ENCODE measurements at regions of chr5 and their contacts with region 1.

Region 1: DNA sequence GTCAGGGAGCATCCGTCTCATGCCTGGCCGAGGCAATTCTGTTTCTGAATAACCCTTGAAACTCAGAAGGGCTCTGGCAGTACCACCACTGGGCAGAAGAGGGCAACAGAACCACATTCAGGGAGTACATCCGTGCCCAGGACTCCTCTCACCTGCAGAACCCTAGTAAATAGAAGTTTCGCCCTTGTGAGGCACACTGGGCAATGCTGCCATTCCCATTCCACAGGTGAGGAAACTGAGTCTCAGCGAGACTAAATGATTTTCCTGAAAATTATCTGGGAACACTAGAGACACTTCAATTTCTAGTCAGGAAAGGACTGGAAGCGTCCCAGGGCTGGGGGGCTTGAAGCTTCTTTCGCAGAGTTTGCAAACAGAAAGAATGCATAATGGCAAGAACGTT is 74.7 kb downstream of the FGF1 start:
- H3K4me3 ChIP-seq: no peak overlapping the region
- H3K27ac ChIP-seq: no peak overlapping the region
- H3K4me1 ChIP-seq: no peaks in the 10 kb centered on the region
- CTCF ChIP-seq: peak; percentile 80

Region 2: GRCh38 chr5:142597546-142598341 is 13.4 kb before region 1 on chr5:
- CTCF ChIA-PET with region 1: interaction called, 48 read pairs
- POLR2A ChIA-PET with region 1: no interaction called
- H3K4me3 ChIP-seq: no peak overlapping the region
- H3K27ac ChIP-seq: no peak overlapping the region
- H3K4me1 ChIP-seq: peaks cover 21% of the 10 kb centered on the region
- CTCF ChIP-seq: no peak

Region 3: DNA sequence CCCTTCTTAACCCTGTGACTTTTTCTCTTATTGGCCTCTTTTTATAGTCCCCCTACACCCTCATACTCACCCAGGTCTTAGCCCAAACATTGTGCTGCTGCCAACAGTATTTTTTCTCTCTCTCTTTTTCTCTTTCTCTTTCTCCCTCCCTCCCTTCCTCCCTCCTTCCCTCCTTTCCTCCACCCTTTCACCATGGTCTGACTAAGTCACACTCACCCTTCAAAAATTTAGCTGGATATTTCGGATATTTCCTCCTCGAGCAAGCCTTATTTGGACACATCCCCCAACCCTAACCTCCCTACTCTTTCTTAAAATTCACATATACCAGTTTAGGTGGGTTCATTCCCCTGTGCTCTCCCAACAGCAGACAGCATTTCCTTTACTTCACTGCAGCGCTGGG is 10.1 kb after region 1 on chr5:
- CTCF ChIA-PET with region 1: interaction called, 10 read pairs
- POLR2A ChIA-PET with region 1: no interaction called
- H3K4me3 ChIP-seq: no peak overlapping the region
- H3K27ac ChIP-seq: no peak overlapping the region
- H3K4me1 ChIP-seq: no peaks in the 10 kb centered on the region
- CTCF ChIP-seq: no peak

Region 4: DNA sequence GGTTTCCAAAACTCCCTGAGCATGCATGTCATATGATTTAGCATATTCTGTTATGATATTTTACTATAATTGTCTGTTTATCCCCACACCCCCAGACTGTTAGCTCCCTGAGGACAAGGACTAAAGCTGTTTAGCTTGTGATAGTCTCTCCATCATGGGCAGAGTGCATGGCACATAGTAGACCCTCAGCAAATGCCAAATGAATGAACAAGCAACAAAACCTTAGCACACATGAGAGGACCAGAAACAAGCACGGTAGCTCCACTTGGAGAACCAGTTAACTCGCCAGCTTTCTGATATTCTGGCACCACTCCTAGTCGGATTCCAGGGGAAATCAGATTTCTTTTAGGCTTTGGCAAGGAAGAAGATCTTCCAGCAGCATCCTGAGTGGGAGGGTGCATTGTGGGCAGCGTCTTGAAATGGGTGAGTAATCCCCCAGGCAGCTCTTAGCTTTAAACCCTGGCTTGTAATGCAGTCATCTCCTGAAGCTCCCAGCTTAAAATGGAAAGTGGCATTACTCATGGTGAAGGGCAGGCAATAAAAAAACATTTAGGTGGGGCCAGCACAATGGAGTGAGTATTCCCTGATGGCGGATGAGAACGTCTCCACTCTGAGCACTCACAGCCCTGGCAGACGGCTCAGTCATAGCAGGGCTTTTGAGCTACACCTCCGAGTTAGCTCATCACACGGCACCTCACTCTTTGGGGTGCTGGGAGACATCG is 33.6 kb after region 1 on chr5:
- CTCF ChIA-PET with region 1: interaction called, 13 read pairs
- POLR2A ChIA-PET with region 1: no interaction called
- H3K4me3 ChIP-seq: peak overlapping the region; percentile 21
- H3K27ac ChIP-seq: no peak overlapping the region
- H3K4me1 ChIP-seq: peaks cover 5% of the 10 kb centered on the region; the same call in 1 of the 2 replicates
- CTCF ChIP-seq: no peak

Measured in HEK293 (cell line).